ENCODE measurements at regions of chr11 and their contacts with region 1.

Region 1: GRCh38 chr11:46845740-46846509 is at the start of gene CKAP5:
- DNase-seq: peak; percentile 90
- H3K4me3 Mint-ChIP-seq: peak within 1 kb of the TSS; percentile 98
- H3K27ac Mint-ChIP-seq: peak within 1 kb of the TSS; percentile 93
- H3K4me1 Mint-ChIP-seq: peaks cover 46% of the 10 kb centered on the region
- H3K27me3 Mint-ChIP-seq: peaks cover 2% of the 10 kb centered on the region
- total RNA-seq, gene CKAP5: 157 to 160 TPM

Region 2: GRCh38 chr11:46826310-46827044 is 19.4 kb before region 1 on chr11:
- CTCF ChIA-PET with region 1: interaction called, 3 read pairs
- POLR2A ChIA-PET with region 1: interaction called, 11 read pairs
- DNase-seq: peak; percentile 75
- H3K4me3 Mint-ChIP-seq: peak overlapping the region; percentile 59
- H3K27ac Mint-ChIP-seq: no peak overlapping the region
- H3K4me1 Mint-ChIP-seq: peaks cover 23% of the 10 kb centered on the region
- H3K27me3 Mint-ChIP-seq: no peaks in the 10 kb centered on the region

Measured in activated CD4-positive, alpha-beta memory T cell treated with anti-CD3 and anti-CD28 coated beads, Interleukin-2, amount 10 ng/mL, durations not matched to agents 7 days and 5 days (primary cell).